Activated naive CD4-positive, alpha-beta T cell treated with anti-CD3 and anti-CD28 coated beads for 36 hours (primary cell): ENCODE measurements at regions of chr1 and their contacts with region 1.

Region 1: DNA sequence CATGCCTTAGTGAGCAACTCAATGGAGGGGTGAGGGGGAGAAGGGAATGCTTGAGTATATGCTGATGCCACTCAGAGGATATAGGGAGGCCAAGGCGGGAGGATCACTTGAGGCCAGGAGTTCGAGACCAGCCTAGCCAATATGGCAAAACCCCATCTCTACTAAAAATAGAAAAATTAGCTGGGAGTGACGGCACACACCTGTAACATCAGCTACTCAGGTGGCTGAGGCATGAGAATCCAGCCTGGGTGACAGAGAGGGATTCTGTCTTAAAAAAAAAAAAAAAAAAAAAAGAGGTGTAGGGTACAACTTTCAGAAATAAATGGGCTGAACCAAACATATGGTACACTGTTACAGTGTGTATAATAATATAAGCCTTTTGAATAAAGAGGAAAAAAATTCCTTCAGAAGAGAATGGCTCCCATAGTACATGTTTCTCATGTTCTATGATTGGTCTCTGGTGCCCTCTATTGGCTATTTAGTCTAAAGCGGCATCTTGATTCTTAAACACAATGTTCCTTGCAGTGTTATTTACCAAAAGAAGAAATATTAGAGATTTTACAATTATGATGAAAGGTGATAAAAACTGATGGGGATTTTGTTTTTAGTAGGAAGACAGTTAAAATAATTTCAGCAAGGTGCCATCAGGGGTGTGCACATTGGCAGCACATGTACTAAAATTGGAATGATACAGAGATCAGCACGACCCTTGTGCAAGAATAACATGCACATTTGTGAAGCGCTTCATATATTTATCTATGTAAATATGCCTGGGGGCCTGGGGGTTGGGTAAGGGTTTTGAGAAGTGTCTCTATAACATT is 109.8 kb downstream of the PATJ start:
- DNase-seq: peak; percentile 11
- H3K4me3 Mint-ChIP-seq: no peak overlapping the region
- H3K27ac Mint-ChIP-seq: no peak overlapping the region
- H3K4me1 Mint-ChIP-seq: no peaks in the 10 kb centered on the region
- H3K27me3 Mint-ChIP-seq: no peaks in the 10 kb centered on the region

Region 2: GRCh38 chr1:60848583-60849188 is 1003.4 kb before region 1 on chr1:
- CTCF ChIA-PET with region 1: no interaction called
- intact Hi-C with region 1: loop called (anchors 10 kb)
- DNase-seq: no peak
- H3K4me3 Mint-ChIP-seq: no peak overlapping the region
- H3K27ac Mint-ChIP-seq: no peak overlapping the region
- H3K4me1 Mint-ChIP-seq: no peaks in the 10 kb centered on the region
- H3K27me3 Mint-ChIP-seq: peaks cover 10% of the 10 kb centered on the region

Region 3: GRCh38 chr1:61049850-61050540 is 802.1 kb before region 1 on chr1:
- CTCF ChIA-PET with region 1: interaction called, 7 read pairs
- intact Hi-C with region 1: loop called (anchors 1 kb)
- DNase-seq: peak; percentile 93
- H3K4me3 Mint-ChIP-seq: peak overlapping the region; percentile 74
- H3K27ac Mint-ChIP-seq: no peak overlapping the region
- H3K4me1 Mint-ChIP-seq: peaks cover 28% of the 10 kb centered on the region
- H3K27me3 Mint-ChIP-seq: peaks cover 42% of the 10 kb centered on the region

Region 4: DNA sequence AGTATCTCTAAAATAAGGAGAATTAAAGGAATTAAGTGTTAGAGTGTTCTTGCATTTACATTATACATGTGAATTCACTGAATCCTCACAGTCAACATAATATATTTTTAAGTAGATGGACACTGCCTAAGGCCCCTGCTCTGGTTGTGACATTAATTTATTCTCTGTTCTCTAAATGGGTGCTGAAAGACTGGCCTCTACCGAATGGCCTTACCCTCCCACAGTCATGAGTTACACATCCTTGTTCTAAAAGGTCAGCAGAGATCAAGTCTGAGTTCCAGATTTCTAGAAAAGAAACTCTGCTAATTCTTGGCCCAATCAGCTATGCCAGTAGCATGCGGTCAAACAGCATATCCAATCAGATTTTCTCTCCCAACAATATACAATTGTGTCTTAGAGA is 320.3 kb before region 1 on chr1:
- CTCF ChIA-PET with region 1: no interaction called
- intact Hi-C with region 1: no loop called
- DNase-seq: no peak
- H3K4me3 Mint-ChIP-seq: no peak overlapping the region
- H3K27ac Mint-ChIP-seq: no peak overlapping the region
- H3K4me1 Mint-ChIP-seq: no peaks in the 10 kb centered on the region
- H3K27me3 Mint-ChIP-seq: no peaks in the 10 kb centered on the region

Region 5: GRCh38 chr1:61552630-61553305 is 299.3 kb before region 1 on chr1:
- CTCF ChIA-PET with region 1: interaction called, 6 read pairs
- intact Hi-C with region 1: loop called (anchors 1 kb)
- DNase-seq: no peak
- H3K4me3 Mint-ChIP-seq: no peak overlapping the region
- H3K27ac Mint-ChIP-seq: no peak overlapping the region
- H3K4me1 Mint-ChIP-seq: no peaks in the 10 kb centered on the region
- H3K27me3 Mint-ChIP-seq: peaks cover 5% of the 10 kb centered on the region

Region 6: DNA sequence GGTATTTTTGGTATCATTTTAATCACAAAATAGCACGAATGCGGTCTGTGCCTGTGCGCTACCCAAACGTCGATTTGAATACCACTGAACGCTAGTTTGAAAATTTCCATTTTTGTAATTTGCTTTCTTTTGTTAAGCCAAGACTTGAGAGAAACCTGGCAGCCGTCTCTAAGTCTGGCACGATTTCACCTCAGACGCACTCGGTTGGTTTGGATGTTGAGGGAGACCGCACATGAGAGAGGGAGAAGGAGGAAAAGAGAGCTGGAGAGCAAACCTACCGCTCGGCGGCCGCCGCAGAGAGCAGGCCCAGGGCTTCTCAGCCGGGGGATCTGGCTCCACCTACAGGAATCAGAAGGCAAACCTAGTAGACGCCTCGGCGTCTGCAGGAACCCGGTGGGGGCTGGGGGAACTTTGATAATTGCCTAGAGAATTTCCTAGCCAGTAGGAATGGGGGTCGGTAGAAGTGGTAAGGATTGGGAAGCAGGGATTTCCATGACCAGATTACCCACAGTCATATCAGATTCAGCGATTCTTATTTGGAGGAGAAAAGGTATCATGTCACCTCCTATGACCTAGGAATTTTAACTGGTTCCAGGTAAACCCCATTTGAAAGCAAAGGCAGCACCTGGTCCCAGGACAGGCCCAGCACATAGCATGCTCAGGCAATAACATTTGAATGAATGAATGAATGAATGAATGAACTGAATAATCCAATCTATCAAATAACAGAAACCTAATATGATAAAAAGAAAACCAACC is 210.3 kb before region 1 on chr1:
- CTCF ChIA-PET with region 1: no interaction called
- intact Hi-C with region 1: loop called (anchors 1 kb)
- DNase-seq: peak; percentile 84
- H3K4me3 Mint-ChIP-seq: peak overlapping the region; percentile 68
- H3K27ac Mint-ChIP-seq: peak overlapping the region; percentile 38
- H3K4me1 Mint-ChIP-seq: peaks cover 10% of the 10 kb centered on the region
- H3K27me3 Mint-ChIP-seq: peaks cover 3% of the 10 kb centered on the region

Region 7: GRCh38 chr1:61898658-61899057 is 46.6 kb after region 1 on chr1:
- CTCF ChIA-PET with region 1: no interaction called
- intact Hi-C with region 1: no loop called
- DNase-seq: no peak
- H3K4me3 Mint-ChIP-seq: no peak overlapping the region
- H3K27ac Mint-ChIP-seq: no peak overlapping the region
- H3K4me1 Mint-ChIP-seq: no peaks in the 10 kb centered on the region
- H3K27me3 Mint-ChIP-seq: no peaks in the 10 kb centered on the region